PC-3 (cell line): ENCODE measurements at regions of chr21 and their contacts with region 1.

Region 1: DNA sequence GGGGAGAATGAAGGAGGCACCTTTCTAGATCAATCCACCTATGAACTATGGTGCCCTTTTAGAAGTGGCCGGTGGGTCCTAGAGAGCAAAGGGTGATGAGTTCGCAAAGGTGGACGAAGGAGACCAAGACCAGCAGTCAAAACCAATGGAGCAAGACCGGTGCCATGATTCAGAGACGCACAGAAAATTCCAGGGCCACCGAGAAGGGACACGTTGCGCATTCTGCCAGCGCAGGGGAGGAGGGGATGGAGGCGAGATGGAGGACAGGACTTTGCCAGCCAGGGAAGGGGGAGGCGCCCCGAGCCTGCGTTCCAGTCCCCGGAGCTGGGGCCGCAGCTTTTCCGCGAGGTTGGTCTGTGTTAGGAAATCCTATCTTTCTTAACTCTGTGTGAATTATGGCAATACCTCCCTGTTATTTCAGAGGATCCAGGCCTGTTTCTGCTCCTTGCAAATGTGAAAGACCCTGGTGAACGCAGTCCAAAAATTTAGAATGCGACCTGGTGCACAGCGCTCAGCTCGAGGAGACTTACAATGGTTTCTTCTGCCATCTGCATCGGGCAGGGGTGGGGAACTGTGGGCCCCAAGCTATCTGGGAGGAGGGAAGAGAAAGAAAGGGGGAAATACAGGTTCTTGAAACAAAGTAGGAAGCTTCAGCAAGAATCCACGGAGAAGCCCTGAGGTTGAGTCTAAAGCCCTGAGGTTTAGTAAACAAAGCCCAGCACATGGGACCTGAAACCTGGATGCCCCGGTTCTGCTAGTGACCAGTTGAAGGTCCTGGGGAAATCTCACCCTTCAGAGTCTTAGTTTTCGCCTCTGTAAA is 129.4 kb downstream of the MRPS6 start:
- DNase-seq: no peak
- ATAC-seq: no peak
- H3K4me3 ChIP-seq: peak overlapping the region; percentile 56
- H3K27ac ChIP-seq: no peak overlapping the region
- H3K4me1 ChIP-seq: peaks cover 17% of the 10 kb centered on the region
- H3K27me3 ChIP-seq: no peaks in the 10 kb centered on the region
- CTCF ChIP-seq: no peak

Region 2: DNA sequence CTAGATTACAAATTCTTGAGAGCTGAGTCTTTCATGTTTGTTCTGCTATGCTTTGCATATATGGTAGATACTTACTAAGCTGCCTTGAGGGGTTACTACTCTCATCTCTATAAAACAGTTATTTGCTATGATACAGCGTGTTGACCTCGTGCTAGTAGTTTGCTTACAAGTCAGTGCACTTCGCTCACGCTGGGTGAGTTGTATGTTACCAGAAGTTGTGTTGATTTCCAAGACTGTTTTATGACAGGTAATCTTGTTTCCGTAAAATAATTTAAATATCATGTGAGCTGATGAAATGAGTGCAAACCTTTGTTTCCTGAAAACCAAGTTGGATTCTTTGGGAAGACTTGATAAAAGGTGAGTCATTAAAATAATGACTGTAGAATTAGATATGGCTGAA is 122.1 kb before region 1 on chr21:
- CTCF ChIA-PET with region 1: interaction called, 6 read pairs
- POLR2A ChIA-PET with region 1: interaction called, 3 read pairs
- intact Hi-C with region 1: loop called (anchors 5 kb)
- DNase-seq: peak; percentile 34
- ATAC-seq: peak; percentile 40; the same call in 1 of the 2 replicates
- H3K4me3 ChIP-seq: no peak overlapping the region
- H3K27ac ChIP-seq: no peak overlapping the region
- H3K4me1 ChIP-seq: peaks cover 44% of the 10 kb centered on the region
- H3K27me3 ChIP-seq: no peaks in the 10 kb centered on the region
- CTCF ChIP-seq: no peak

Region 3: GRCh38 chr21:34132926-34133325 is 69.8 kb before region 1 on chr21:
- CTCF ChIA-PET with region 1: interaction called, 14 read pairs
- POLR2A ChIA-PET with region 1: no interaction called
- intact Hi-C with region 1: no loop called
- DNase-seq: no peak
- ATAC-seq: no peak
- H3K4me3 ChIP-seq: no peak overlapping the region
- H3K27ac ChIP-seq: no peak overlapping the region
- H3K4me1 ChIP-seq: peaks cover 12% of the 10 kb centered on the region
- H3K27me3 ChIP-seq: no peaks in the 10 kb centered on the region
- CTCF ChIP-seq: no peak

Region 4: DNA sequence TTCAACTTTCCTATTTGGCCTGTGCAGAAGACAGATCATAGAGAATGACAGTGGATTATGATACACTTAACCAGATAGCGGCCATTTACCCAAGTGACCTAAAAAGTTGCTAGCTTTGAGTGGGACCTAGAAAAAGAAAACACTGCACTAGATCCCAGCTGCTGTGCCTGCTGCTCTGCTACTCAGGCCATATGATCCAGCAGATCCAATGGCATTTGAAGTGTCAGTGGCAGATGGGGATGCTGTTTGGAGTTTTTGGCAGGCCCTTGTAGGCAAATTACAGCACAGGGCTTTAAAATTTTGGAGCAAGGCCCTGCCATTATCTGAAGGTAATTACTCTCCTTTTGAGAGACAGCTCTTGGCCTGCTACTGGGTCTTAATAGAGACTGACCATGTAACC is 87.1 kb after region 1 on chr21:
- CTCF ChIA-PET with region 1: no interaction called
- POLR2A ChIA-PET with region 1: no interaction called
- intact Hi-C with region 1: no loop called
- DNase-seq: no peak
- ATAC-seq: no peak
- H3K4me3 ChIP-seq: no peak overlapping the region
- H3K27ac ChIP-seq: no peak overlapping the region
- H3K4me1 ChIP-seq: no peaks in the 10 kb centered on the region
- H3K27me3 ChIP-seq: peaks cover 15% of the 10 kb centered on the region
- CTCF ChIP-seq: no peak